ENCODE measurements at regions of chrX and their contacts with region 1.

Region 1: GRCh38 chrX:15973299-15973698 is 118.7 kb upstream of the AP1S2 start:
- H3K4me3 Mint-ChIP-seq: no peak overlapping the region
- H3K27ac Mint-ChIP-seq: peak overlapping the region; percentile 28
- H3K4me1 Mint-ChIP-seq: peaks cover 43% of the 10 kb centered on the region
- H3K27me3 Mint-ChIP-seq: no peaks in the 10 kb centered on the region

Region 2: GRCh38 chrX:15686818-15687685 is 286.2 kb before region 1 on chrX:
- intact Hi-C with region 1: loop called (anchors 5 kb)
- H3K4me3 Mint-ChIP-seq: no peak overlapping the region
- H3K27ac Mint-ChIP-seq: no peak overlapping the region
- H3K4me1 Mint-ChIP-seq: peaks cover 16% of the 10 kb centered on the region
- H3K27me3 Mint-ChIP-seq: no peaks in the 10 kb centered on the region

Region 3: DNA sequence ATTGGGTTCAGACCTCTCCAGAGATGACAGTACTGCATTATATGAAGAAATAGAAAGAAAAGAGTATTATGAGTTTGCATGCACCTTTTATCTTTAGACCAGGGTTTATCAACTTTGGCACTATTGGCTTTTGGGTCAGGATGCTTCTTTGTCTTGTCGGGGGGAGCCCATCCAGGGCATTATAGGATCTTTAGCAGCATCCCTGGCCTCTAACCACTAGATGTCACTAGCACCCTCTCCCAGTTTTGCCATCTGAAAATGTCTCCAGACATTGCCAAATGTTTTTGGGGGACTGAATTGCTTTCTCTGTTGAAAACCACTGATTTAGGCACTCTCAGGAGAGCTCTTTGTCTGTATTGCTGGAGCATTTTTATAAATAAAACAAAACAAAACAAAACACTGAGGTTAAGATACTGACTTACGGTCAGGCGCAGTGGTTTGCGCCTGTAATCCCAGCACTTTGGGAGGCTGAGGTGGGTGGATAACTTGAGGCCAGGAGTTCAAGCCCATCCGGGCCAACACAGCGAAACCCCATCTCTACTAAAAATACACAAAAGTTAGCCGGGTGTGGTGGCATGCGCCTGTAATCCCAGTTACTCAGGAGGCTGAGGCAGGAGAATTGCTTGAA is 211.6 kb before region 1 on chrX:
- intact Hi-C with region 1: loop called (anchors 5 kb)
- H3K4me3 Mint-ChIP-seq: no peak overlapping the region
- H3K27ac Mint-ChIP-seq: no peak overlapping the region
- H3K4me1 Mint-ChIP-seq: peaks cover 6% of the 10 kb centered on the region
- H3K27me3 Mint-ChIP-seq: no peaks in the 10 kb centered on the region

Region 4: DNA sequence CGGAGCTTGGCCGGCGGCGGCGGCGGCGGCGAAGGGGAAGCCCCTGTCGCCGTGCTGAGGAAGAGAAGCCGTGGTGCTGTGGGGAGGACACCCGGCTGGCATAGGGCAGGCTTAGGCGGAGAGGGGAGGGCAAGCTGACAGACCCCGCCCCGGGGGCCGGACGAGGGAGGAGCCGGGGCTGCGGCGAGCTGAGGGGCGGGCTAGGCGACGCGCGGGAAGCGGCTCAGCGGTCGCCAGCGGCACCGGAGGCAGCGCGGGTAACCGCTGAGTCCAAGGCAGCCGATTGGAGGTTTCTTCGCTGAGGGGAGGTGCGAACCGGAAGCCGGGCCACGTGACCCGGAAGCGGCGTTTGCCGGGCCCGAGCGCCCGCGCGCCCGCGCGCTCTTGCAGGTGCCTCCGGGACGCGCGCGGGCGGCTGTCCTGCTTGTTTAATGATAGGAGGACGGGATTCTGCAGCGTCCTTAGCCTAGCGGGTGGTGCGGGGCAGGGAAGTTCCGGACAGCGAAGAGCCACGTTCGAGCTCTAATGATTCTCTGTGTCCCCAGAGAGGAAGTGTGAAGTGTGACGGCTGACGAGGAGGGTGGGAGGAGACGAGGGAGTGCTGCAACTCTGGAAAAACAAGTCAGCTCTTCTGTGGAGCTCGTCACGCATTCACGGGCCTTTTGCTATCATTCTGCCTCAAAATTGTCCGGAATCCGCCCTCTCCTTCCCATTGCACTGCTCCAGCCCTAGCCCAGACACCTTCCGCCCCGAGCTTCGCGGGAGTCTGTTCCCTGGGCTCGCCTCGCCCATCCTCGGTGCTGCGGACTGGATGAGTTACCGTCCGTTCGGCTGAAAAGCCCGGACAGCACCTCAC is 118.4 kb before region 1 on chrX and contains the start of gene AP1S2:
- intact Hi-C with region 1: loop called (anchors 5 kb)
- H3K4me3 Mint-ChIP-seq: peak within 1 kb of the TSS; percentile 87
- H3K27ac Mint-ChIP-seq: peak within 1 kb of the TSS; percentile 100
- H3K4me1 Mint-ChIP-seq: peaks cover 19% of the 10 kb centered on the region
- H3K27me3 Mint-ChIP-seq: no peaks in the 10 kb centered on the region

Measured in dendritic cell treated with granulocyte-macrophage colony-stimulating factor and Interleukin-4, amounts not matched to agents 40 ng/mL and 50 ng/mL, for 4 days (primary cell).